ENCODE measurements at regions of chr19 and their contacts with region 1.

Region 1: DNA sequence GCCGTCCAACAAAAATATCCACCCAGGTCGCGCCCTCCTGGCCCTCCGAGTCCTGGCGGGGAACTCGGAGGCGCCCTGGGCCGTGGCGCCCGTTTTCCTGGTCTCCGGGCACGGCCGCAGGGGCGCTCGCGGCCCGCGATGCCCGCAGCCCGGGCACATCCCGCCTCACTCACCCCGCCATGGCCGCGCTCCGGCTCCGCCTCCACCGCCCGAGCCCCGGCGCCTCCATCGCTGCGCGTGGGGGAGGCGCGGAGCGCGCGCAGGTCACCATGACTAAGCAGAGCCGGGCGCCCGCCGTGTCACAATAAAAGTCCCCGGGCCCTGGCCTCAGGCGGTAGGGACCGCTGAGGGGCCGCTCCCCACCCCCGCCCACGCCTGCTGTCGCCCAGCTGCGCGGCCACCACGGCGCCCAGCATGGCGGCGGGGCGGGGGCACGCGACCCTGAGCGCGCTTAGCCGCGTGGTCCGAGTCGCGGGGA is 593 bp downstream of the KEAP1 start:
- DNase-seq: peak; percentile 87
- ATAC-seq: peak; percentile 87
- H3K4me3 ChIP-seq: peak overlapping the region in 4 of 5 experiments; percentile 72 to 87 (median 78)
- H3K4me3 Mint-ChIP-seq: peak overlapping the region; percentile 88
- H3K27ac ChIP-seq: peak overlapping the region; percentile 63 to 69
- H3K27ac Mint-ChIP-seq: peak overlapping the region; percentile 85
- H3K4me1 ChIP-seq: peaks cover 6 to 18% of the 10 kb centered on the region in 2 donors
- H3K4me1 Mint-ChIP-seq: peaks cover 22% of the 10 kb centered on the region
- H3K27me3 ChIP-seq: no peaks in the 10 kb centered on the region
- H3K27me3 Mint-ChIP-seq: no peaks in the 10 kb centered on the region
- CTCF ChIP-seq: no peak

Region 2: DNA sequence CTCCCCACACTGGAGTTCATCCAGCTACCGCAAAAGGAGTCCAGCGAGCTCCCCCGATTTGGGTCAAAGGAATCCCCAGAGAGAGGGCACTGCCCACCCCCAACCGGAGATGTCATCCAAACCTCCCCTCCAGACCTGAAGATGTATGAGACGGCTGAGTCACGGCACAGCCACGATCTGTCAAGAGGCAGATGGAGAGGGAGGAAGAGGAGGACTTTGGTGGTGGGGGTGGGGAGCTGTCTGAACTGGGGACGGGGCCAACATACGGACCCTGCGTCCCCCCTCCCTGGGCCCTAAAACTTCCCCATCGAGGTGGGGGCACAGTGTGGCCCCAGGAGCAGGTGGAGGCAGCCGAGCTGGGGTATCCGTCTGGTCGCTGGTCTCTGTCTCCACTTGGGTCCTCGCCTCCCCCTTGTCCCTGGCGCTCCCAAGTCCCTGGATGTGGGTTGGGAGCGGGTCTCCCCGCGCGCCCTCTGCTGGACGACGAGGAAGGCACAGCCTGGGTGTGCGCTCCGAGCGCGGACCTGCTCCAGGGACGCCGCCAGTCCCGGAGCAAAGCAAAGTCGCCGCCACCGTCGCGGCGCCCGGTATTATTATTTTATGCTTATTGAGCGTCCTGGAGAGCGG is 78.4 kb before region 1 on chr19:
- CTCF ChIA-PET with region 1: interaction called, 4 read pairs
- POLR2A ChIA-PET with region 1: no interaction called
- intact Hi-C with region 1: loop called (anchors 5 kb)
- DNase-seq: peak; percentile 73
- ATAC-seq: peak; percentile 3
- H3K4me3 ChIP-seq: peak overlapping the region; percentile 19 to 66 (median 41)
- H3K4me3 Mint-ChIP-seq: peak overlapping the region; percentile 91
- H3K27ac ChIP-seq: no peak overlapping the region
- H3K27ac Mint-ChIP-seq: peak overlapping the region; percentile 95
- H3K4me1 ChIP-seq: peaks cover 78 to 85% of the 10 kb centered on the region in 2 donors
- H3K4me1 Mint-ChIP-seq: peaks cover 79% of the 10 kb centered on the region
- H3K27me3 ChIP-seq: peaks cover 0 to 52% (median 27%) of the 10 kb centered on the region in 4 experiments
- H3K27me3 Mint-ChIP-seq: peaks cover 30% of the 10 kb centered on the region
- CTCF ChIP-seq: peak; percentile 74

Region 3: GRCh38 chr19:10431943-10432735 is 70.4 kb before region 1 on chr19:
- CTCF ChIA-PET with region 1: interaction called, 4 read pairs
- POLR2A ChIA-PET with region 1: interaction called, 17 read pairs
- intact Hi-C with region 1: loop called (anchors 5 kb)
- DNase-seq: peak; percentile 88
- ATAC-seq: peak; percentile 53
- H3K4me3 ChIP-seq: peak overlapping the region in 4 of 5 experiments; percentile 29 to 60 (median 43)
- H3K4me3 Mint-ChIP-seq: peak overlapping the region; percentile 94
- H3K27ac ChIP-seq: no peak overlapping the region
- H3K27ac Mint-ChIP-seq: peak overlapping the region; percentile 91
- H3K4me1 ChIP-seq: peaks cover 49 to 55% of the 10 kb centered on the region in 2 donors
- H3K4me1 Mint-ChIP-seq: peaks cover 60% of the 10 kb centered on the region
- H3K27me3 ChIP-seq: peaks cover 0 to 25% (median 12%) of the 10 kb centered on the region in 4 experiments
- H3K27me3 Mint-ChIP-seq: peaks cover 13% of the 10 kb centered on the region
- CTCF ChIP-seq: no peak

Region 4: GRCh38 chr19:10461047-10461790 is 41.3 kb before region 1 on chr19:
- CTCF ChIA-PET with region 1: interaction called, 3 read pairs
- POLR2A ChIA-PET with region 1: no interaction called
- intact Hi-C with region 1: loop called (anchors 2 kb)
- DNase-seq: peak; percentile 89
- ATAC-seq: peak; percentile 90
- H3K4me3 ChIP-seq: peak overlapping the region; percentile 25 to 62 (median 48)
- H3K4me3 Mint-ChIP-seq: peak overlapping the region; percentile 70
- H3K27ac ChIP-seq: no peak overlapping the region
- H3K27ac Mint-ChIP-seq: no peak overlapping the region
- H3K4me1 ChIP-seq: peaks cover 7 to 8% of the 10 kb centered on the region in 2 donors
- H3K4me1 Mint-ChIP-seq: peaks cover 11% of the 10 kb centered on the region
- H3K27me3 ChIP-seq: no peaks in the 10 kb centered on the region
- H3K27me3 Mint-ChIP-seq: no peaks in the 10 kb centered on the region
- CTCF ChIP-seq: no peak

Region 5: GRCh38 chr19:10471909-10472308 is 30.7 kb before region 1 on chr19:
- CTCF ChIA-PET with region 1: no interaction called
- POLR2A ChIA-PET with region 1: no interaction called
- intact Hi-C with region 1: no loop called
- DNase-seq: peak; percentile 43
- ATAC-seq: no peak
- H3K4me3 ChIP-seq: no peak overlapping the region
- H3K4me3 Mint-ChIP-seq: no peak overlapping the region
- H3K27ac ChIP-seq: no peak overlapping the region
- H3K27ac Mint-ChIP-seq: no peak overlapping the region
- H3K4me1 ChIP-seq: no peaks in the 10 kb centered on the region
- H3K4me1 Mint-ChIP-seq: no peaks in the 10 kb centered on the region
- H3K27me3 ChIP-seq: no peaks in the 10 kb centered on the region
- H3K27me3 Mint-ChIP-seq: peaks cover 6% of the 10 kb centered on the region
- CTCF ChIP-seq: peak; percentile 50

Region 6: DNA sequence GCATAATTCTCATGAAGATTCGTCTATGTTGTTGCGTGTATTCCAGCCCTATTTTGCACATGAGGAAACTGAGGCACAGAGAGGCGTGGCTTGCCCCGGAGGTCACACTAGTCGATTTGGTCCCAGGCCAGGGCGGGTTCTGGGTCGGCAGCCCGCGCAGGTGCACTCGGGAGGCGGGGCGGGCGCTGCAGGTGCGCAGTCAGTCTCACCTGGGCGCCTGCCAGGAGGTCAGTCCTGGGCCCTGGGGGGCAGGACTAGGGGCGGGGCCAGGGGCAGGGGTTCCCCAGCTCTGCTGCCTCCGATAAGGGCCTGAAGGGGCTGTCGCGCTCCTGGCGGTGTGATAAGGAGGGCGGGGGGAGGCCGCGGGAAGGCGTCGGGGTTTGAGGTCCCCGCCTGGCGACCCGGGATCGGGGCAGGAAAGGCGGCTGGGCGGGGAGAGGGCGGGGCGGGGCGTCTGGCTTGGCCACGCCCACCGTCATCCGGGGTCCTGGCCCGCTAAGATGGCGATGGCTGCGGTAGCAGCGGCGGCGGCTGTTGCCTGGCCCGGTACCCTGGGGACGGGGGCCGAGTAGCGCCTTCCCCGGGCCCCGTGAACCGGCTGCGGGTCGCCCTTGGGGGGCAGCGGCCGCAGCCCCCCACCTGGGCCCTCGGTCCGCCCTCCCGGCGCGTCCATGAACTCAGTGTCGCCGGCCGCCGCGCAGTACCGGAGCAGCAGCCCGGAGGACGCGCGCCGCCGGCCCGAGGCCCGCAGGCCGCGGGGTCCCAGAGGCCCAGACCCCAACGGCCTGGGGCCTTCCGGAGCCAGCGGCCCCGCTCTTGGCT is 41.1 kb after region 1 on chr19 and contains the start of gene ATG4D:
- CTCF ChIA-PET with region 1: interaction called, 5 read pairs
- POLR2A ChIA-PET with region 1: no interaction called
- intact Hi-C with region 1: loop called (anchors 5 kb)
- DNase-seq: peak; percentile 88
- ATAC-seq: peak; percentile 82
- H3K4me3 ChIP-seq: peak within 1 kb of the TSS; percentile 27 to 88 (median 75)
- H3K4me3 Mint-ChIP-seq: peak within 1 kb of the TSS; percentile 89
- H3K27ac ChIP-seq: peak within 1 kb of the TSS; percentile 34 to 85
- H3K27ac Mint-ChIP-seq: peak within 1 kb of the TSS; percentile 87
- H3K4me1 ChIP-seq: peaks cover 12 to 19% of the 10 kb centered on the region in 2 donors
- H3K4me1 Mint-ChIP-seq: peaks cover 16% of the 10 kb centered on the region
- H3K27me3 ChIP-seq: peaks cover 0 to 5% (median 0%) of the 10 kb centered on the region in 4 experiments
- H3K27me3 Mint-ChIP-seq: peaks cover 6% of the 10 kb centered on the region
- CTCF ChIP-seq: no peak
- total RNA-seq, gene ATG4D: 58.8 and 59.2 TPM in 2 replicates

Region 7: GRCh38 chr19:10602330-10603083 is 99.9 kb after region 1 on chr19:
- CTCF ChIA-PET with region 1: no interaction called
- POLR2A ChIA-PET with region 1: interaction called, 10 read pairs
- intact Hi-C with region 1: no loop called
- DNase-seq: peak; percentile 86
- ATAC-seq: peak; percentile 73
- H3K4me3 ChIP-seq: peak overlapping the region; percentile 89 to 100 (median 94)
- H3K4me3 Mint-ChIP-seq: peak overlapping the region; percentile 96
- H3K27ac ChIP-seq: peak overlapping the region; percentile 97 to 99
- H3K27ac Mint-ChIP-seq: peak overlapping the region; percentile 99
- H3K4me1 ChIP-seq: peaks cover 30 to 47% of the 10 kb centered on the region in 2 donors
- H3K4me1 Mint-ChIP-seq: peaks cover 37% of the 10 kb centered on the region
- H3K27me3 ChIP-seq: no peaks in the 10 kb centered on the region
- H3K27me3 Mint-ChIP-seq: no peaks in the 10 kb centered on the region
- CTCF ChIP-seq: no peak

Measured in B cell (primary cell).